HepG2 (cell line): ENCODE measurements at regions of chr6 and their contacts with region 1.

Region 1: GRCh38 chr6:135535989-135536414 is 38.5 kb upstream of the AHI1 start:
- DNase-seq: peak; percentile 40
- ATAC-seq: peak; percentile 71
- H3K4me3 ChIP-seq: no peak overlapping the region
- H3K27ac ChIP-seq: no peak overlapping the region
- H3K4me1 ChIP-seq: no peaks in the 10 kb centered on the region
- H3K27me3 ChIP-seq: no peaks in the 10 kb centered on the region; a peak in 1 of 5 replicates
- CTCF ChIP-seq: peak; percentile 65
- EP300 ChIP-seq: no peak
- POLR2A ChIP-seq: no peak
- RAD21 ChIP-seq: peak; percentile 52; the same call in 1 of the 2 replicates

Region 2: GRCh38 chr6:135627092-135627715 is 91.2 kb after region 1 on chr6:
- CTCF ChIA-PET with region 1: no interaction called
- POLR2A ChIA-PET with region 1: no interaction called
- in situ Hi-C with region 1: no loop called
- intact Hi-C with region 1: no loop called
- DNase-seq: no peak
- ATAC-seq: no peak
- H3K4me3 ChIP-seq: no peak overlapping the region
- H3K27ac ChIP-seq: no peak overlapping the region
- H3K4me1 ChIP-seq: no peaks in the 10 kb centered on the region
- H3K27me3 ChIP-seq: no peaks in the 10 kb centered on the region; a peak in 1 of 5 replicates
- CTCF ChIP-seq: no peak
- EP300 ChIP-seq: no peak
- POLR2A ChIP-seq: no peak
- RAD21 ChIP-seq: no peak

Region 3: DNA sequence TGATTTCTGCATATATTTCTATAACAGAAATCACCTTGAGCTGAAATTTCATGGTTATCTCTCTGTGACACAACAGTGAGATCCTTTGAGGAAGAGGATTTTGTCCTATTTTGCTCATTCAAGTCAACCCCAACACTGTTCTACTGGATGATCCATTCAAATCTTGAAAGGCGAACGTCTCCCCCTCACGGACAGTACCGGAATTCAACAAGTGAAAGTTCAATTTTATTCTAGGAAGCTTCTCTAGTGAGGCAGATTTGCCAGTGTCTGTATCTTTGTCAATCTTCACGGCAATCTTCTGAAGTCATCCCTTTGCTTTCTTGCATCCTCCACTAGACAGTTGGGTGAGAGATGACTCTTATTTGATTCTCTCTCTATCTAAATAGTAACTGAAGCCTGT is 223.8 kb after region 1 on chr6:
- CTCF ChIA-PET with region 1: no interaction called
- POLR2A ChIA-PET with region 1: no interaction called
- in situ Hi-C with region 1: loop called (anchors 10 kb)
- intact Hi-C with region 1: loop called (anchors 1 kb)
- DNase-seq: peak; percentile 24
- ATAC-seq: peak; percentile 83
- H3K4me3 ChIP-seq: no peak overlapping the region
- H3K27ac ChIP-seq: no peak overlapping the region
- H3K4me1 ChIP-seq: no peaks in the 10 kb centered on the region
- H3K27me3 ChIP-seq: no peaks in the 10 kb centered on the region
- CTCF ChIP-seq: peak; percentile 47
- EP300 ChIP-seq: no peak
- POLR2A ChIP-seq: no peak
- RAD21 ChIP-seq: 0 out of 2 replicates have a peak, but pooled peaks have one; percentile 15

Region 4: GRCh38 chr6:135909737-135910387 is 373.9 kb after region 1 on chr6:
- CTCF ChIA-PET with region 1: interaction called, 5 read pairs
- POLR2A ChIA-PET with region 1: no interaction called
- in situ Hi-C with region 1: loop called (anchors 10 kb)
- intact Hi-C with region 1: loop called (anchors 1 kb)
- DNase-seq: peak; percentile 70
- ATAC-seq: peak; percentile 97
- H3K4me3 ChIP-seq: no peak overlapping the region
- H3K27ac ChIP-seq: no peak overlapping the region
- H3K4me1 ChIP-seq: no peaks in the 10 kb centered on the region
- H3K27me3 ChIP-seq: 0 out of 5 replicates have a peak, but pooled peaks cover 0 to 7% of the 10 kb centered on the region in 2 experiments
- CTCF ChIP-seq: peak; percentile 81
- EP300 ChIP-seq: no peak
- POLR2A ChIP-seq: no peak
- RAD21 ChIP-seq: peak; percentile 54; the same call in 1 of the 2 replicates

Region 5: DNA sequence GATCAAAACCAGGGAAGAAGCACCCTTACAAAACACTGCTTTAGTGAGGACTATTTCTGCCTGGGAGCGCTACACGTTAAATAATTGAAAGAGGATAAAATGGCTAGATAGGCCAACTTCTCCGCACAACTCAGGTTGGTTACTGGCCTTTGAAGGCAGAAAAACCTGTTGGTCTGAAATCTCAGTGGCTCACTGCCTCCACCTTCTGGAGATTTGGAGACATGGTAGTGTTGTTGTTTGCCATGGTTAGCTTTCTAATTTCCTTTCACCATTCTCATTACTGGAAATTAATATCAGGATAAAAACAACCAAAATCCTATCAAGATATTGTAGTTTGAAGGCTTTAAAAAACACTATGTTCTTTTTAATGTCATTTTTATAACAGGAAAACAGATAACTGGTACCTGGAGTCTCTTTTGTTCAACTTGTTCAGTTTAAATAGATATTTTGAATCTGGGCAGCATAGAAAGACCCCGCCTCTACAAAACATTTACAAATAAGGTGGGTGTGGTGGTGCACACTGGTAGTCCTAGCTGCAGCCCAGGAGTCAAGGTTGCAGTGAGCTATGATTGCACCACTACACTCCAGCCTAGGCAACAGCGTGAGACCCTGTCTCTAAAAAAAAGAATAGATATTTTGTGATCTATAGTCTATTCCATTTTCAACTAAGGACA is 781.2 kb after region 1 on chr6:
- CTCF ChIA-PET with region 1: interaction called, 6 read pairs
- POLR2A ChIA-PET with region 1: no interaction called
- in situ Hi-C with region 1: loop called (anchors 25 kb)
- intact Hi-C with region 1: loop called (anchors 2 kb)
- DNase-seq: peak; percentile 62
- ATAC-seq: peak; percentile 95
- H3K4me3 ChIP-seq: no peak overlapping the region
- H3K27ac ChIP-seq: no peak overlapping the region
- H3K4me1 ChIP-seq: no peaks in the 10 kb centered on the region
- H3K27me3 ChIP-seq: no peaks in the 10 kb centered on the region; a peak in 2 of 5 replicates
- CTCF ChIP-seq: peak; percentile 86
- EP300 ChIP-seq: no peak
- POLR2A ChIP-seq: no peak
- RAD21 ChIP-seq: peak; percentile 69